Activated CD8-positive, alpha-beta T cell treated with anti-CD3 and anti-CD28 coated beads, Interleukin-2, amount 10 ng/mL, durations not matched to agents 7 days and 5 days (primary cell): ENCODE measurements at regions of chr5 and their contacts with region 1.

Region 1: DNA sequence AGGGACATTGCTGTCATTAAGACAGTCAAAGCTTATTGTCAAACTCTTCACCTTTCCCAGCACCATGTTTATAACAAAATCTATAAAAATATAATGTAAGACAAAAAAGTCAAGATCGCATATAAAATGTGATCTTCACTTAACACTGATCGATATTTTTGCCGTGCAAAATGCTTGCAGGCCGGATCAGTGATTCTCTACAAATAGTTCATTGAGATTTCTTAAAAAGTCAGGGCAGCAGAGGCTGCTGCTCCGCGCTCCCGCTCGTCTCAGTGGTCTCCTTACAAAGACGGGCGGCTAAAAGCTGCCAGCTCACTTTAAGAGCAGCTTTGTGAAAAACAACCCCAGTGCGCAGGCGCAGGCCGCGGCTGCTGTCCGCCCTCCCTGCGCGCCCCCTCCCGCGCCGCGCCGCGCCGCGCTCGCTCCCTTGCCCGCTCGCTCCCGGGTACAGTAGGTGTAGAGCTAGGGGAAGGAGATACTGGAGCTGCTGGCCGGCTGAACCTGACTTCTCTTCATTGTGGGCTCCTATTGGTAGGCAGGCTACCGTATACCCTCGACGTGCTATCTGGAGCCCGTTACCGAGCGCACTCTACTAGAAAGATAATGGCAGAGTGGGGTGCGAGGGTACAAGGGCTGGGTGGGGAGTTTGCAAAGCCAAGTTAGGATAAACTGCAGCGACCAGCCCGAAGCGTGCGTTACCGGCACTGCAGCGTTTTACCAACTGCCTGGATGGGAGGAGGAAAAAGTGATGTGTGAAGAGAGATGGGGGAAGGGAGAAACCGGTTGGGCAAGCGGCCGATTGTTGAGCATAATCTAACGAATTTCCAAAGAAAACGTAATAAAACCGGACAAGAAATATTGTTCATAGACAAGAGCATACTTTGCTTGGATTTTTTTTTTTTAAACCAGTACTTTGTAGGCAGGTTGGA is at the start of gene ARRDC3:
- DNase-seq: peak; percentile 97
- ATAC-seq: peak; percentile 59
- H3K4me3 Mint-ChIP-seq: peak within 1 kb of the TSS; percentile 87
- H3K27ac Mint-ChIP-seq: peak within 1 kb of the TSS; percentile 99
- H3K4me1 Mint-ChIP-seq: peaks cover 22% of the 10 kb centered on the region
- H3K27me3 Mint-ChIP-seq: peaks cover 2% of the 10 kb centered on the region
- total RNA-seq, gene ARRDC3: 36.5 to 37.1 TPM

Region 2: GRCh38 chr5:90843443-90843842 is 539.8 kb before region 1 on chr5:
- CTCF ChIA-PET with region 1: no interaction called
- POLR2A ChIA-PET with region 1: no interaction called
- DNase-seq: no peak
- ATAC-seq: no peak
- H3K4me3 Mint-ChIP-seq: no peak overlapping the region
- H3K27ac Mint-ChIP-seq: no peak overlapping the region
- H3K4me1 Mint-ChIP-seq: peaks cover 7% of the 10 kb centered on the region
- H3K27me3 Mint-ChIP-seq: peaks cover 16% of the 10 kb centered on the region

Region 3: DNA sequence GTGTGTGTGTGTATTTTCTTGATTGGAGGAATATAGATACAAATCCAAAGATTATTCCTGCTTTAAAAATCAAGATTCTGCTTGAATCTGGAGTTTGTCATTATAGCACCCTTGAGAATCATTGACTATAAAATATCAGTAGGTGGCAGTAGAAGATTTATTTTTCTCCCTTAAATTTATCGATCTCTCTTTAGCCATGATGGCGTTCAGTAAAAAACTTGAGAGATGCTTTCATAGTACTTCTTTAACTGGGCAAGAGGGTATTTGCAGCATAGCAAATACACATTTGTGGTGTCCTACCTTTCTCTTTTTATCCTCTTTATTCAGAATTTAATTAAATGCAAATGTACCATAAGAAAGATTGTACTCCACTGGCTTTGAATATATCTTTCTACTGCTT is 517.0 kb before region 1 on chr5:
- CTCF ChIA-PET with region 1: interaction called, 31 read pairs
- POLR2A ChIA-PET with region 1: no interaction called
- DNase-seq: no peak
- ATAC-seq: peak; percentile 44
- H3K4me3 Mint-ChIP-seq: no peak overlapping the region
- H3K27ac Mint-ChIP-seq: no peak overlapping the region
- H3K4me1 Mint-ChIP-seq: peaks cover 6% of the 10 kb centered on the region
- H3K27me3 Mint-ChIP-seq: peaks cover 6% of the 10 kb centered on the region

Region 4: DNA sequence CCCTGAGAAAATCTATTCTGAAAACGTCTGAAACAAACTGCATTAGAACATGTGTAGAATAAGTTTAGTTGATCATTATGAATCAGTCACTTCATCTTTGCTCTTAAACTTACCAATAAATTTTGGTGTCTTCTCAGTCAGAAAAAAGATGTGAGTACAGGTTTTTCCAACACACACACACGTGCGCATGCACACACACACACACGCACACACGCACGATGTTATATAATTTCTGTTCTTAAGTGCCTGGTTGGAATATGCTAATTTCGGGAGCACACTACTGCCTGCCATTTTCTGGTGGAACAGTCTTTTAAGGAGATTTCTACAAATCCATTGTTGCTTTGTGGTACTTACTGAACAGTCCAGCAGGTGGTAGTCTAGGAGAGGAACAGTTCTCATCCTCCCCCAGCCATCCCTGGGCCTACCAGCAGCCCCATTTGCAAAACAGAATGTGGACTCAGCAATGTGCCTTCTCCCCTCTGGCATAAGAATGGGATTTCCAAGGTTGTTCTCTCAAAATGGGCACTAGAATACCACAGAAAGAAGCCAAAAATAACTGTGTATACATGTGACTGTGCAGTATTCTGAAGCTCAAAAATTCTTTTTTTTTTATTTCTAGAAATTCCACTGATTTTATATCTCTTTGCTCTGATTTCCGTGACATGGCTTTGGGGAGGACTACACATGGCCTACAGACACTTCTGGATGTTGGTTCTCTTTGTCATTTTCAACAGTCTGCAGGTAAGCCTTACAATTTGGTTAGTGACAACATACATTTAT is 281.5 kb before region 1 on chr5:
- CTCF ChIA-PET with region 1: interaction called, 40 read pairs
- POLR2A ChIA-PET with region 1: interaction called, 3 read pairs
- DNase-seq: peak; percentile 74
- ATAC-seq: peak; percentile 96
- H3K4me3 Mint-ChIP-seq: no peak overlapping the region
- H3K27ac Mint-ChIP-seq: no peak overlapping the region
- H3K4me1 Mint-ChIP-seq: peaks cover 2% of the 10 kb centered on the region
- H3K27me3 Mint-ChIP-seq: peaks cover 2% of the 10 kb centered on the region

Region 5: GRCh38 chr5:91219803-91220371 is 163.4 kb before region 1 on chr5:
- CTCF ChIA-PET with region 1: interaction called, 230 read pairs
- POLR2A ChIA-PET with region 1: interaction called, 20 read pairs
- DNase-seq: peak; percentile 39
- ATAC-seq: no peak
- H3K4me3 Mint-ChIP-seq: no peak overlapping the region
- H3K27ac Mint-ChIP-seq: no peak overlapping the region
- H3K4me1 Mint-ChIP-seq: peaks cover 3% of the 10 kb centered on the region
- H3K27me3 Mint-ChIP-seq: peaks cover 1% of the 10 kb centered on the region

Region 6: GRCh38 chr5:91266184-91266705 is 117.0 kb before region 1 on chr5:
- CTCF ChIA-PET with region 1: interaction called, 38 read pairs
- POLR2A ChIA-PET with region 1: interaction called, 18 read pairs
- DNase-seq: no peak
- ATAC-seq: peak; percentile 80
- H3K4me3 Mint-ChIP-seq: no peak overlapping the region
- H3K27ac Mint-ChIP-seq: no peak overlapping the region
- H3K4me1 Mint-ChIP-seq: peaks cover 31% of the 10 kb centered on the region
- H3K27me3 Mint-ChIP-seq: peaks cover 3% of the 10 kb centered on the region

Region 7: DNA sequence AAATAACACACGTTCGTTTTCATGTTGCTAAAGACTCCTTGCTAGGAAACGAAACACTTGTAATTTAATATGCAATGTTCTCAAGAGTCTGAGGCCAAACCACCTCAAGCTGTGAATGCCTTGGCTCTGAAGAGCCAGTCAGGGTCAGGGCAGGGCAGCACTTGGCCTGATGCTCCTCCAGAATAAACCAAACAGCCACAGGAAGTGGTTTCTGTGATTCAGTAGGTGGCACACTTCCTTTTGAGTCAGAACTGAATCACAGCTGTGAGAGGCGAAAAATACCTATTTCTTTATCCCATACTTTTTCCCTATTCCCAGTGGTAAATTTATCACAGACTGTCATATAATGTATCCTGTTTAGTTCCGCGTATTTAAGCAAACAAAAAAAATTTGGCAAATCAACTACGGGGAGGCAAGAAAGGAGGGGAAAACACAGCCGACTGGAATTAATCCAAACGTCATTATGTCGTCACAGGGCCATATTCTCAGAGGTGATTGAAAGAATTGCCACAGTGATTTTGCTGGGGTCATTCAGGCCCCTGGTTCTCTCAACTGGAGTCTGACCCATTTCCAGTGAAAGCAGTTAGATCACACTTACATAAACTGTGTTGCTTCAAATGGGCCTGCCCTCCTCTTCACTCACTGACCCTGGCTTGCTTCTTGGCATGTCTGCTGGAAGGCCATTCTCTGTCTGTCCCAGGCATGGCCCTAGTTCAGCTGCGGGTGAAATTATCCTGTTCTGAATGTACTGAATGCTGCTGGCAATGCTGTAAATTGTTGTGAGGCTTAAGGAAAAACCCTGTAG is 71.4 kb before region 1 on chr5:
- CTCF ChIA-PET with region 1: interaction called, 65 read pairs
- POLR2A ChIA-PET with region 1: interaction called, 65 read pairs
- DNase-seq: peak; percentile 84
- ATAC-seq: peak; percentile 85
- H3K4me3 Mint-ChIP-seq: peak overlapping the region; percentile 61
- H3K27ac Mint-ChIP-seq: peak overlapping the region; percentile 82
- H3K4me1 Mint-ChIP-seq: peaks cover 57% of the 10 kb centered on the region
- H3K27me3 Mint-ChIP-seq: no peaks in the 10 kb centered on the region

Region 8: GRCh38 chr5:91373016-91373415 is 10.3 kb before region 1 on chr5:
- CTCF ChIA-PET with region 1: interaction called, 28 read pairs
- POLR2A ChIA-PET with region 1: interaction called, 7 read pairs
- DNase-seq: no peak
- ATAC-seq: no peak
- H3K4me3 Mint-ChIP-seq: no peak overlapping the region
- H3K27ac Mint-ChIP-seq: no peak overlapping the region
- H3K4me1 Mint-ChIP-seq: peaks cover 34% of the 10 kb centered on the region
- H3K27me3 Mint-ChIP-seq: no peaks in the 10 kb centered on the region

Region 9: DNA sequence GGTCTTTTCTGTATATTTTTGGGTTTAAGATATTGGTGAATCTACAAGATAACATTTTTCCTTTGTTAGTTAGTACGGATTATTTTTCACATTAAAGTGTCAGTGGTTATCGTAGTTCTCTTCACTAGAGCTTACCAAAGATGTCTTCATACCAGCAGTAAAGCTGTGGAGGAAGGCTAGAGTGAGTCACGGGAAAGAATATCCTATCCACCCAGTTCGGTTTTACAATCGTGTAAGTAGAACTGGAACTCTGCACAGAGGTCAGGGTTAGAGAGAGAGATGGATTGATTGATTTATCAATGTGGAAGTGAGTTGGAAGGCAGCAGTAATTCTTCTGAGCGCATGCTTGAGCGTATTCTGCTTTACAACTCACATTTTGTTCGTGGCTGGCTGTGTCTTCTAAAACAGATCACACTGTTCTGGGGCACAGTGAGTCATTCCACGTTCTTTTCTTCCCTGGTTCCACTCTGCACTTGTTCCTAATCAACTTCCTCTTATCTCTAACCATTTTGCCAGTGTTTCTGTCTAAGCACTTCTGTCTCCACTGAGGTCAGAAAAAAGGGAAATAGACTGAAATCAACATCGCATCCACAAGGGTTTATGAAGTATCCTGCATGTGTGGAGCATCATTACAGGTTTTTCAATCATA is 86.3 kb after region 1 on chr5:
- CTCF ChIA-PET with region 1: no interaction called
- POLR2A ChIA-PET with region 1: no interaction called
- DNase-seq: no peak
- ATAC-seq: no peak
- H3K4me3 Mint-ChIP-seq: no peak overlapping the region
- H3K27ac Mint-ChIP-seq: no peak overlapping the region
- H3K4me1 Mint-ChIP-seq: peaks cover 9% of the 10 kb centered on the region
- H3K27me3 Mint-ChIP-seq: no peaks in the 10 kb centered on the region